Head of caudate nucleus (tissue), 42 donors: ENCODE measurements at regions of chr6 and their contacts with region 1.

Region 1: GRCh38 chr6:156564127-156564806 is 212.9 kb upstream of the ARID1B start:
- DNase-seq: peak; percentile 61 to 95 (median 84)

Region 2: GRCh38 chr6:156508923-156509322 is 55.3 kb before region 1 on chr6:
- intact Hi-C with region 1: no loop called
- DNase-seq: peak in 1 of 42 donors; percentile 8

Region 3: DNA sequence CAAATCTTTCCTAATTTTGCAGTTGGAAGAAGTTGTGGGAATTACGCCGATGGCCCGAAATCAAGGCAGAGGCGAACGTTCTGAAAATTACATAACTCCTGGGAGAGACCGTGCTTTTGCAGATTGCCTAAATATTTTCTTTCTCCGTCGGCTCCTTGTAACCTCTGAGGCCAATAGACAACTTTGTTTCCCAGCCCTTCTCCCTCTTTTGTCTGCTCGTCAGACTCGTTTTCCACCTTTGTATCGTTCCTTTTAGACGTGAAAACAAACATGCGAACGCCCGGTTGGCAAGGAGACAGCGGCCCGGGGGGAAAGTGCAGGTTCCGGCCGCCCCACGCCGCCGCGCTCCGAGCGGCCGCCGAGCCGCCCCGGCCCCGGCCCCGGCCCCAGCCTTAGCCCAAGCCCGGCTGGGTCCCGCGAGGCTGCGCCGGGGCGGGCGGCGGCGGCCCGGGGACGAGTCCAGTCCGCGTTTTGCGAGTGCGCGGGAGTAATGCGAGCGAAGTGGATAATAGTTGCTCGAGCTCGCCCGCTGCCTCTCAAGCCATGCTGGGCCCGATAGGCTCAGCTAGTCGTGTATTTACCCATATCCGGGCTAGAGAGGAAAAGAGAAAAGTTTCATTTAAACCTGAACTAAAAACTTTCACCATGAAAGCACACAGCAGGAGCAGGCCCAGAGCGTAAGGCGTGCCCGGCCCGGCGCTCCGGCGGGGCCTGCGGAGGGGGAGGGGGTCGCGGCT is 212.7 kb after region 1 on chr6 and contains the start of gene ARID1B:
- intact Hi-C with region 1: loop called (anchors 10 kb)
- DNase-seq: peak; percentile 57 to 92 (median 81)